CD14-positive monocyte (primary cell): ENCODE measurements at regions of chr6 and their contacts with region 1.

Region 1: DNA sequence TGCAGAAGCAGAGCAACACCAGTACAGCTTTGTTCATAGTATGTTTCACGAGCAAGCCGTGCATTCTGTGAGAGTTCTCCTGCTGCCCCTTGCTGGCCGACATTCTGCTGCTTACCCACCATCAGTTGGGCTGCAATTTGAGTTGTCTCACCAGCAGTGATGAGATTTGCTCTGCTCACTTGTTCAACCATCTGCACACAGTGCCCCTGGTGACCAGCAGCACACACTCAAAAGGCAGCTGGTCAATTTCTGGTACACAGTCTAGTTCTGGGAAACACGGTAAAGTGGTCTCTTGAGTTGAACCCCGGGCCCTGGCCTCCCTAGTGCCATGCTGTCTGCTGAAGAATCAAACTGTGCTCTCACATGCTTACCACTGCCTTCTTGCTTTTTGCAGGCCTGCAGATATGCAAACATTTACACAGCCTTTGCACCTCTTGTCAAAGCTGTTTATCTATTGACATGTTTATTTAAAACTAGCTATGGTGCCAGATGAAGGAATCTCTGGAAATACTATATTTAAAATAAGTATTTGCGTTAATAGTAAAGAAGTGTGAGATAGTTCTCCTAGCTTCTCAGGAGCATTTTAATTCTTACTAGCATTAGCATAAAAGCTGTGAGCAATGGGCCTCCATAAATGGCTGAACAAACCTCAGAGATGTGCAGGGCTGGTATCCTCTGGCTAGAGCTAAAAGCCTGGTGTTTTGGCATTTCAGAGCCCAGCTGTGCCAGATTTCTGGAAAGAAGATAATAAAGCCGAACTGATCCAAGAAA is 234.3 kb downstream of the ARHGAP18 start:
- DNase-seq: no peak
- H3K4me3 ChIP-seq: no peak overlapping the region
- H3K4me3 Mint-ChIP-seq: no peak overlapping the region
- H3K27ac ChIP-seq: no peak overlapping the region
- H3K27ac Mint-ChIP-seq: no peak overlapping the region
- H3K4me1 ChIP-seq: no peaks in the 10 kb centered on the region
- H3K4me1 Mint-ChIP-seq: no peaks in the 10 kb centered on the region
- H3K27me3 ChIP-seq: no peaks in the 10 kb centered on the region
- H3K27me3 Mint-ChIP-seq: peaks cover 0 to 6% (median 0%) of the 10 kb centered on the region in 3 donors
- CTCF ChIP-seq: no peak

Region 2: DNA sequence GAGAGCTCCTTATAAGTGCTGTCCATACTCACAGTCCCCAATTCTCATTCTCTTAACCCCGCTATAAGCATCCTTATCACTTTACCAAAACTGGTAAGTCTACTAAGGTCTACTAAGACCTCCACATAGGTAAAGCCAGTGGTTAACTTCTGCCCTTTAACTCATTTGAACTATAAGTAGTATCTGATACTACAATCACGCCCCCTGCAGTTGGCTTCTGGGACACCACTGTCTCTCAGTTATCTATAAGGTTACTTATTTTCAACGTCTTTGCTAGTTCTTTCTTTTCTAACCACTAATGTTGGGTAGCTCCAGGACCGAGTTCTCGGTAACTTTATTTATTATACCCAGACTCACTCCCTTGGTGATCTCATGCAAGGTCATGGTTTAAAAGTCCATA is 91.7 kb after region 1 on chr6:
- intact Hi-C with region 1: loop called in 1 of 2 experiments (anchors 10 kb)
- DNase-seq: peak; percentile 1 to 19 (median 16)
- H3K4me3 ChIP-seq: no peak overlapping the region
- H3K4me3 Mint-ChIP-seq: no peak overlapping the region
- H3K27ac ChIP-seq: no peak overlapping the region
- H3K27ac Mint-ChIP-seq: no peak overlapping the region
- H3K4me1 ChIP-seq: no peaks in the 10 kb centered on the region
- H3K4me1 Mint-ChIP-seq: no peaks in the 10 kb centered on the region
- H3K27me3 ChIP-seq: no peaks in the 10 kb centered on the region
- H3K27me3 Mint-ChIP-seq: peaks cover 0 to 8% (median 2%) of the 10 kb centered on the region in 3 donors
- CTCF ChIP-seq: peak; percentile 73